Transverse colon (tissue), 4 donors: ENCODE measurements at regions of chr17 and their contacts with region 1.

Region 1: DNA sequence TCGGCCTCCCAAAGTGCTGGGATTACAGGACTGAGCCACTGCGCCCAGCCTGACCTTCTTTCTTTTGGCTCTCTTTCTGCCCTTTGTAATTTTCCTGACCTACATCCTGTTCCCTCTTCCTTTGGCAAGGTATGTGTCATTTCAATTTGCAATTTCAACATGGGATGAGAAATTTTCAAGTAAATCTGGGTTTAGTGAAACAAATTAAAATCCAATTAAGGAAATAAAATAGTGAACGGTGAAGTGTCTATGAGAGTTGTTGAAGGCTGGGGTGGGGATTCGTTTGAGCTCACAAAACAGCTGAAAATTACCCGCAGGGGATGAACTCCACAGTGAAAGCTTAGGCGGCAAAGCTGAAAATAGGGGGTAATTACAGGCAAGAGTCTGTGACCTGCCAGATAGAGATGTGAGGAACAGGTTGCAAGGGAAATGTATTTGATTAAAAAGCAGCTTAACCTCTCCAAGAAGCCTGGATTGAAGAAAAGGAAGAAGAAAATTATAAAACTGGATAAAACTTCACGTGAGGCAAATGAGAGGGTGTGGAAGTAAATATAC is 277.7 kb downstream of the UTP18 start:
- DNase-seq: no peak
- H3K4me3 ChIP-seq: no peak overlapping the region
- H3K27ac ChIP-seq: no peak overlapping the region
- H3K4me1 ChIP-seq: no peaks in the 10 kb centered on the region
- H3K27me3 ChIP-seq: no peaks in the 10 kb centered on the region
- CTCF ChIP-seq: no peak
- EP300 ChIP-seq: no peak
- POLR2A ChIP-seq: no peak

Region 2: GRCh38 chr17:51381262-51381661 is 156.8 kb before region 1 on chr17:
- in situ Hi-C with region 1: no loop called
- intact Hi-C with region 1: no loop called
- DNase-seq: no peak
- H3K4me3 ChIP-seq: no peak overlapping the region
- H3K27ac ChIP-seq: no peak overlapping the region
- H3K4me1 ChIP-seq: no peaks in the 10 kb centered on the region
- H3K27me3 ChIP-seq: no peaks in the 10 kb centered on the region
- CTCF ChIP-seq: no peak
- EP300 ChIP-seq: no peak
- POLR2A ChIP-seq: no peak

Region 3: DNA sequence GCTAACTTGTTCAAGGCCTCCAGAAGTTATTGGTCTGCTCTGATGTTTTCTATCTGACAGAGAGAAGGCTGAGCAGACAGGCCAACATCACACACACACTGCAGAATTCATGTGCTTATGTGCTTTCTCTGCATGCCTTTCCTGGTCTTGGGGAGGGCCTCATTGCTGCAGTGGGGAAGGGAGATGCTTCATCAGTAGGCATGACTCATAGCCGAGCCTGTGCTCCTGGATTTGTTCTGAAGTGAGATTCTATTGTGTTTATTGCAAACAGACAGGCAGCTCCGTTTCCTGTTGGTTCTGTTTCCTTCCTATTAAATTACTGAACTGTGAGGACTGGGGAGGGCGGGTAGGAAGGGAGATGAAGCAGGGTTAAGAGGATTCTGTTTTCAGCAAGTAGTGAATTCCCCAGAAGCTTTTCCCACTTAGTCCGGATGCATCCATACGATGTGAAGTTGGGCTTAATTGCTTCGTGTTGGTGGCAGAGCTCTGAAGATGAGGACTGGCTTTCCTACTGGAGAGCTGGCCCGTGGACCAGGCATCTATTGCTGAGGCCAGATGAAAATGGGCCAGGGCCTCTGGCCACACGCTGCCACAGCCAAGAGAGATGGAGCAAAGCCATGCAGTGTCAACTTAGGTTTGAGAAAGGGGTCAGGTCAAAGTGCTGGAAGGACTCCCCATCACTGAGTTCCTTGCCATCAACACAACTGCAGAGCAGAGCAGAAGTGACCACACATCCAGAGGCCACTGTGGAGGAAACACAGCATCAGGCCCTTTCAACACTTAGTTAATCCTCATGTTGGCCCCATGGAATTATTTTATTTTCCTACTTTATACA is 98.5 kb before region 1 on chr17:
- in situ Hi-C with region 1: no loop called
- intact Hi-C with region 1: no loop called
- DNase-seq: no peak
- H3K4me3 ChIP-seq: no peak overlapping the region
- H3K27ac ChIP-seq: no peak overlapping the region
- H3K4me1 ChIP-seq: no peaks in the 10 kb centered on the region
- H3K27me3 ChIP-seq: no peaks in the 10 kb centered on the region
- CTCF ChIP-seq: no peak
- EP300 ChIP-seq: no peak
- POLR2A ChIP-seq: no peak

Region 4: GRCh38 chr17:51590066-51590656 is 52.1 kb after region 1 on chr17:
- in situ Hi-C with region 1: no loop called
- intact Hi-C with region 1: loop called (anchors 10 kb)
- DNase-seq: no peak
- H3K4me3 ChIP-seq: no peak overlapping the region
- H3K27ac ChIP-seq: no peak overlapping the region
- H3K4me1 ChIP-seq: no peaks in the 10 kb centered on the region
- H3K27me3 ChIP-seq: no peaks in the 10 kb centered on the region
- CTCF ChIP-seq: no peak
- EP300 ChIP-seq: no peak
- POLR2A ChIP-seq: no peak